Right ventricle myocardium inferior (tissue), 1 donor: ENCODE measurements at regions of chr18 and their contacts with region 1.

Region 1: DNA sequence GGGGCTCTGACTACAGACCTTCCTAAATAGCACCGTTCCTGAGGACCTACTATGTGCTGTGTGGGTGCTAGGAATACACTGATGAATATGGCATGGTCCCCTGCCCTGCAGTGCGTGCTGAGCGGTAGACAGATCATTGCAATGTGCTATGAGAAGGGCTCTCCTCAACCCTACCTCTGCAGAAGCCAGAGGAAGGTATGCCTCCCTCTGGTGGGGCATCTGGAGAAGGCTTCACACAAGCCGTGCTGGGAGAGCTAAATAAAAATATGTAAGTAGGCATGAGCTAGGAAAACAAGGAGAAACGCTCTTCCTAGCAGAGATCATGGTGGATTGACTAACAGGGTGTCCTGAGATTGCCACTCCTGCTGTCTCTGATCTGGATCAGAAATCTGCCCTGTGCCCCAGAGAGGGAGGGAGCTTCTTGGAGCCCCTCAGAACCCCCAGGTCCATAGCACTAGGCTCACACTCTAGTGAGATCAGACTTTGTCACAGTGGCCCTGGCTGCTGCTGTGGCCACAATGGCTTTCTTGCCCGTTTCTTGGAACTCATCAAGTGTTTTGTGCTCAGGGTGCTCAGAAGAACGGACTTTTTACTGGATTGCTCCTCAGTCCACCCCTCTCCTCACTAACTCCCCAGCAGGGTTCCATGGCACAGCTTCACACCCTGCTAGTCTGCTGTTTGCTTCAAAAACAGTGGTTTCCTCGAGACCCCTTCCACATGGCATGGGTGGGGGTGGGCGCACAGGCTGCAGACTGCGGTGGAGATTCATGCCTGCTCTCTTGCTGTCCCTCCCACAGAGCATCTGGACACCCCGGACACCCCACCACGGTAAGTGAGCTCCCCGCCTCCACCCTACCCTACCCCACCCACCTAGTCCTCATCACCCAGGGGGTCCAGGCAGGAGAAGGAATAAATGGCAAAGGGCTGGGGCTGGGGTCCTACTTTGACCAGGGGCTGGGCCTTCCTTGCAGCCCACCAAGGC is 14.2 kb downstream of the SIGLEC15 start:
- DNase-seq: no peak
- ATAC-seq: peak; percentile 44

Region 2: DNA sequence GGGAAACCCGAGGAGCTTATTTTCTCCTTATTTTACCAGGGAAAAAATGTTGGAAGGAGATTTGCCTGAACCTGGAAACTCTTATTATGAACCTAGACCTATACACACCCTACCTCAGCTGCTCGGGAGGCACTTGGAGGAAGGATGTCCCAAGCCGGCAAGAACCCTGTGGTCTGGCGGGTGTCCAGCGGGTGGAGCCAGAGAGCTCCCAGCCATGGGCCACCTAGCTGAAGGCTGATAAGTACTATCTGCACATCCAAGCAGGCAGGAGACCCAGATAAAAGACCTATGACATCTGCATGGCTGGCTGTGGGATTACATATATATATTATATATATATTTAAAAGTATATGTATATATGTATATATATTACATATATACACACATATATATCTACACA is 116.8 kb before region 1 on chr18:
- intact Hi-C with region 1: loop called (anchors 2 kb)
- DNase-seq: peak; percentile 83
- ATAC-seq: no peak

Region 3: DNA sequence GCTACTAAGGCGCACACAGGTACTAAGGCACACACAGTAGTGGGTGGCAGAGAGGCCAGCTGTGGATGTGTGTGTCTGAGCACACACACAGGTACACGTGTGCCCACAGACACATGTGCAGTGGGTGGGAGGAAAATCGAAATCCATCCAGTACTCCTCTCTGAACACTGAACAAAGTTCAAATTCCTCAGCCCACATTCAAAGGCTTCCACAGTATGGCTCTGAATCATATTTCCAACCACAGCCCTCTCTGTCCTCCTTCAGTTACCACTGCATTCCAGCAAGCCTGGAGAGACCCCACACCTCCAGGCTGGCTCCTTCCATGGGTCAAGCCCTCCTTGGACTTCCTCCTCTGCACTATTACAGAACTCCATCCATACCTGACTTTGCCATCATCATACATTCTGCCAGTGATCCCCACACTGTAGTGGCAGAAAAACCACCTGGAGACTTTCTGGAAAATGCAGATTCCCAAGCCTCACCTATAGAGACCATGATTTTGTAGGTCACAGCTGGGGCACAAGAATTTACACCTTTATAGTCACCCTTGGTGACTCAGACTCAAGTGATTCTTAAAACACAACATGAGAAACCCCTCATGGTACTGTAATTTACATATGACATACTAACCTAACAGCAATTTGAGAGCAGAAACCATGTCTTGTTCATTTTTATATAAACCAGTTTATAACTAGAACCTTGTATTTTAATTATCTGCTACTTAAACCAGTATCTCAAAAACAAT is 96.1 kb after region 1 on chr18:
- intact Hi-C with region 1: no loop called
- DNase-seq: no peak
- ATAC-seq: no peak